Colonic mucosa (tissue), 4 donors: ENCODE measurements at regions of chr3 and their contacts with region 1.

Region 1: DNA sequence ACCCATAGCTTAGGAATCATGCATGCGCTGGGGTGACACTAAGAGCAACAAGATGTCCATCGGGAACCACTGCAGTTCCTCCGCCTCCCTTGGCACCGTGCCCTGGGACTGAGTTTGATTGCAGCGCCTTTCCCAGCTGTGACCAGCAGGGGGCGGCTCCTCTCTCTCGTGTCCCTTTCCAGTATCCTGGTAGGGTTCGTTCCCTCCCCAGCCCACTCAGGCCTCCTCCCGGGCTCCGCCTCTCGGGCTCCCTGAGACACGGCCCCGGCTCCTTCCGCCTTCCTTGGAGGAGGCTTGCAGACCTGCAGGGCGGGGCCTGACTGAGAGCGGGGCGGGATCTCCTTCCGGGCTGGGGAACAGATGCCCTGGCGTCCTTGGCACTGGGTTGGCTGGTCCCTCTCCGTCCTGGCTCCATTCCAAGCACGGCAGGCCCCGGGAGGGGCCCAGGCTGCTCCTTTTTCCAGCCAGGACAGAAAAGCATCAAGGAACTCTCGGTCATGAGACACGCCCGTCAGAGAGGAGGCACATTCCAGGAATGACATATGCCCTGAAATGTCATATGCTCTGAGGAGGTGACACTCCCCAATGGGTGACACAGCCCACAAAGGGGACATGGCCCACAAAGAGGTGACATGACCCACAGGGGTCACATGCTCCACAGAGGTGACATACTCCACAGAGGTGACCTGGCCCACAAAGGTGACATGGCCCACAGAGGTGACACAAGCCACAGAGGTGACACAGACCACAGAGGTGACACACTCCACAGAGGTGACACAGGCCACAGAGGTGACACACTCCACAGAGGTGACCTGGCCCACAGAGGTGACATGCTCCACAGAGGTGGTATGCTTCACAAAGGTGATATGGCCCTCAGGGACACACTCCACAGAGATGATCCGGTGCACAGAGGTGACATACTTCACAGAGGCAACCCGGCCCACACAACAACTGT is 79.0 kb downstream of the ABHD5 start:
- DNase-seq: peak; percentile 99
- H3K4me3 ChIP-seq: peak overlapping the region; percentile 16
- H3K27ac ChIP-seq: peak overlapping the region; percentile 49
- H3K4me1 ChIP-seq: no peaks in the 10 kb centered on the region
- H3K27me3 ChIP-seq: no peaks in the 10 kb centered on the region
- CTCF ChIP-seq: peak; percentile 92

Region 2: GRCh38 chr3:43540624-43541023 is 229.1 kb before region 1 on chr3:
- intact Hi-C with region 1: loop called (anchors 10 kb)
- DNase-seq: no peak
- H3K4me3 ChIP-seq: no peak overlapping the region
- H3K27ac ChIP-seq: no peak overlapping the region
- H3K4me1 ChIP-seq: no peaks in the 10 kb centered on the region
- H3K27me3 ChIP-seq: no peaks in the 10 kb centered on the region
- CTCF ChIP-seq: no peak

Region 3: GRCh38 chr3:44198284-44199269 is 428.8 kb after region 1 on chr3:
- intact Hi-C with region 1: loop called (anchors 10 kb)
- DNase-seq: peak; percentile 73
- H3K4me3 ChIP-seq: no peak overlapping the region
- H3K27ac ChIP-seq: no peak overlapping the region
- H3K4me1 ChIP-seq: no peaks in the 10 kb centered on the region
- H3K27me3 ChIP-seq: no peaks in the 10 kb centered on the region
- CTCF ChIP-seq: peak; percentile 80

Region 4: GRCh38 chr3:44411031-44411645 is 641.4 kb after region 1 on chr3:
- intact Hi-C with region 1: no loop called
- DNase-seq: no peak
- H3K4me3 ChIP-seq: no peak overlapping the region
- H3K27ac ChIP-seq: no peak overlapping the region
- H3K4me1 ChIP-seq: no peaks in the 10 kb centered on the region
- H3K27me3 ChIP-seq: no peaks in the 10 kb centered on the region
- CTCF ChIP-seq: no peak